CD8-positive, alpha-beta T cell (primary cell): ENCODE measurements at regions of chr1 and their contacts with region 1.

Region 1: DNA sequence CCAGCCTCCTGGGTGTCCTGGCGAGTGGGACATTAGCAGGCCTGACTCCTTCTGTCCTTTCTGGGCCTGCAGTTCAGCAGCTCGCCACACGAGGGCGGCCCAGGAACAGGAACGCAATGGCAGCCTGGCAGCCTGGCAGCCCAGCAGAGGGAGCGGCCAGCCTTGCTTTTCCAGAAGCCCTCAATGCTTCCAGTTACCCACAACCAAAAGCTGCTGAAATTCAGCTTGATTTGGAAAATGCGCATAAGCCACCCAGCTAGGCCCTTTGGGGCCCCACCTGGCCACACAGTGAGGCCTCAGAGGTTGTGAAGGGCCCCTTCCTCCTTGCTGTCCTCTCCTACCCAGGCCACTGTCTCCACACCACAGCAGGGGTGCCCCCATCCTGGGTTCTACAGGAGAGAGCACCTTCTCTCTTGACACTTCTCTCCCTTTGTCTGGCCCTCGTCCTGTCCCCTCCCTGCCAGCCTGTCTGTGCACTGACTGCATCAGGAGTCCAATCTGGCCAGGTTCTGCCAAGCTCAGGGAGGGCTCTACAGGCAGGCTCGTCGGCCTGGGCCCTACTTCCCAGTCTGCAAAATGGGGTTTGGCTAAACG is 103.4 kb upstream of the VAMP3 start:
- DNase-seq: peak; percentile 73 to 91 (median 81)
- ATAC-seq: peak; percentile 83
- H3K4me3 ChIP-seq: no peak overlapping the region
- H3K4me3 Mint-ChIP-seq: no peak overlapping the region
- H3K27ac ChIP-seq: no peak overlapping the region
- H3K27ac Mint-ChIP-seq: no peak overlapping the region
- H3K4me1 ChIP-seq: peaks cover 5% of the 10 kb centered on the region
- H3K4me1 Mint-ChIP-seq: peaks cover 10% of the 10 kb centered on the region
- H3K27me3 ChIP-seq: peaks cover 0 to 3% of the 10 kb centered on the region in 2 experiments
- H3K27me3 Mint-ChIP-seq: peaks cover 2% of the 10 kb centered on the region
- CTCF ChIP-seq: peak; percentile 95

Region 2: GRCh38 chr1:7680207-7680954 is 12.7 kb after region 1 on chr1:
- CTCF ChIA-PET with region 1: interaction called, 65 read pairs
- POLR2A ChIA-PET with region 1: interaction called, 3 read pairs
- intact Hi-C with region 1: no loop called
- DNase-seq: peak in 8 of 9 experiments; percentile 24 to 69 (median 47)
- ATAC-seq: peak; percentile 66
- H3K4me3 ChIP-seq: peak overlapping the region; percentile 45 to 80
- H3K4me3 Mint-ChIP-seq: peak overlapping the region; percentile 77
- H3K27ac ChIP-seq: peak overlapping the region in 1 of 2 experiments; percentile 47
- H3K27ac Mint-ChIP-seq: no peak overlapping the region
- H3K4me1 ChIP-seq: peaks cover 5% of the 10 kb centered on the region
- H3K4me1 Mint-ChIP-seq: no peaks in the 10 kb centered on the region
- H3K27me3 ChIP-seq: no peaks in the 10 kb centered on the region
- H3K27me3 Mint-ChIP-seq: peaks cover under 1% of the 10 kb centered on the region
- CTCF ChIP-seq: no peak

Region 3: GRCh38 chr1:7698641-7699040 is 30.9 kb after region 1 on chr1:
- CTCF ChIA-PET with region 1: interaction called, 22 read pairs
- POLR2A ChIA-PET with region 1: no interaction called
- intact Hi-C with region 1: no loop called
- DNase-seq: no peak
- ATAC-seq: no peak
- H3K4me3 ChIP-seq: no peak overlapping the region
- H3K4me3 Mint-ChIP-seq: no peak overlapping the region
- H3K27ac ChIP-seq: no peak overlapping the region
- H3K27ac Mint-ChIP-seq: no peak overlapping the region
- H3K4me1 ChIP-seq: no peaks in the 10 kb centered on the region
- H3K4me1 Mint-ChIP-seq: peaks cover 11% of the 10 kb centered on the region
- H3K27me3 ChIP-seq: peaks cover 0 to 3% of the 10 kb centered on the region in 2 experiments
- H3K27me3 Mint-ChIP-seq: peaks cover 18% of the 10 kb centered on the region
- CTCF ChIP-seq: no peak

Region 4: DNA sequence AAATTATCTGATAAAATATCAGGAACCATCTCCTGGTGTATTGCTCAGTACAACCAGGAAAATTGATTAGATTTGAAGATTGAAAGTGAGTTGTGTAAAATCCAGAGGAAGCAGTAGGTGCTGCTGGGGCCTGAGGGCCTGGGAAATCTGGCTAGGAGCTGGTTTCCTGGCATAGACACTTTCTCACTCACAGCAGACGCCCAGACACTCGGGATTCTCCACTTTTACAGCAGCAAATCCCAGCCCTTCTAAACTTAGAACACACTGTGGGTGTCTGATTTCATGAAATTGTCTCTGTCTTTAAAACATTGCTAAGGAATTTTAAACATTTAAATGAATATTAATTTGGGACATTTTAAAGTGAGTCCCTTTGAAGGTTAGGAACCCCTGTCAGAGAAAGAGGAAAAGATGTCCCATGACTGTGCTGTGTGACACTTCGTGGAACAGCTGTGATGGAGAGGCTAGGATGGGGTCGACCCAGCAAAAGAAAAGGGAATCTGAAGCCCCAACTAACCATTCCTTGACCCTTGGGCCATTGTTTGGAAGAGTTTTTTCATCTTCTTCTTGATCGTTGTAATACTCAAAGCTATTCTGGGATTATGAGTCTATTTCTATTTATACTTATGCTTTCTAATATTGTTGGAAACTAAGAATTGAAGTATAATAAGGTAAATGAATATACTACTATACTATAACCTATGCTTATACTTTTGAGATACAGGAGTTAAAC is 54.4 kb after region 1 on chr1:
- CTCF ChIA-PET with region 1: interaction called, 10 read pairs
- POLR2A ChIA-PET with region 1: no interaction called
- intact Hi-C with region 1: no loop called
- DNase-seq: no peak
- ATAC-seq: no peak
- H3K4me3 ChIP-seq: no peak overlapping the region
- H3K4me3 Mint-ChIP-seq: no peak overlapping the region
- H3K27ac ChIP-seq: no peak overlapping the region
- H3K27ac Mint-ChIP-seq: no peak overlapping the region
- H3K4me1 ChIP-seq: no peaks in the 10 kb centered on the region
- H3K4me1 Mint-ChIP-seq: peaks cover 5% of the 10 kb centered on the region
- H3K27me3 ChIP-seq: no peaks in the 10 kb centered on the region
- H3K27me3 Mint-ChIP-seq: peaks cover 21% of the 10 kb centered on the region
- CTCF ChIP-seq: no peak

Region 5: DNA sequence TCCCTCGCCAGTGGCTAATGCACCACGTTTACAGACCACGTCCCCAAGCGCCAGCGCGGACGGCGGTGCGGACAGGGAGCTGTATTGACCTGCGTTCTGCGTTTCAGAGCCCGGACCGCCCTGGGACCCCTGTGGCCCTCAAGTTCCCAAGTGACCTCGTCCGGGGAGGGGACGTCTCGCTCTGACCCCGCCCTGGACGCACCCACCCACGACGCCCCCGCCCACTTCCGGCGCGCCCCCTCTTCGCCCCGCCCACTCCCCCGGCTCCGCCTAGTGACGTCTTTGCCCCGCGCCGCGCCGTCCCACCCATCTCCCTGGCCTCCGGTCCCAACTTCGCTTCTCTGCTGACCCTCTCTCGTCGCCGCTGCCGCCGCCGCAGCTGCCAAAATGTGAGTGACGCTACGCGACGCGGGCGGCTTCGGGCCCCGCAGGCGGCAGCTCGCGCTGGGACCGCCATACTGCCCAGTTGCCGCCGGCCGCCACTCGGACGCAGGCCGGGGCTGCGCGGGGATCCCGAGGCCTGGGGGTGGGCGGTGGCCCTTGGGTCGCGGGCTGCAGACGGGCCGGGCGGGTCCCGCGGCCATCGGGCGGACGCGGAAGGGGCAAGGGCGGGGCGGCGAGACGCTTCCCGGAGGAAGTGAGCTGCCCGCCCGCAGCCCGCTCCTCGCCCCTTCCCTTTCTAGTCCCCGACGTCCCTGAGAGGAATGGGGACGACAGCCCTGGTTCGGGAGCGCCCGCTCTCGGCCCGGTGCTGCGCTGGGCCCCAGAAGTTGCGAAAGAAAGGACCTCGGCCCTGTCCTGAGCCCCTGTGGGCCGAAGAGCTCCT is 103.5 kb after region 1 on chr1 and contains the start of gene VAMP3:
- CTCF ChIA-PET with region 1: interaction called, 16 read pairs
- POLR2A ChIA-PET with region 1: no interaction called
- intact Hi-C with region 1: no loop called
- DNase-seq: peak; percentile 71 to 92 (median 87)
- ATAC-seq: peak; percentile 96
- H3K4me3 ChIP-seq: peak within 1 kb of the TSS; percentile 68 to 80
- H3K4me3 Mint-ChIP-seq: peak within 1 kb of the TSS; percentile 88
- H3K27ac ChIP-seq: peak within 1 kb of the TSS; percentile 60 to 74
- H3K27ac Mint-ChIP-seq: peak within 1 kb of the TSS; percentile 91
- H3K4me1 ChIP-seq: peaks cover 9% of the 10 kb centered on the region
- H3K4me1 Mint-ChIP-seq: peaks cover 42% of the 10 kb centered on the region
- H3K27me3 ChIP-seq: no peaks in the 10 kb centered on the region
- H3K27me3 Mint-ChIP-seq: peaks cover 4% of the 10 kb centered on the region
- CTCF ChIP-seq: no peak
- total RNA-seq, gene VAMP3: 76.2 to 88.1 TPM

Region 6: GRCh38 chr1:7961216-7962015 is 293.7 kb after region 1 on chr1 and contains the start of gene PARK7:
- CTCF ChIA-PET with region 1: no interaction called
- POLR2A ChIA-PET with region 1: no interaction called
- intact Hi-C with region 1: loop called in 1 of 2 experiments (anchors 5 kb)
- DNase-seq: peak; percentile 99 to 100 (median 100)
- ATAC-seq: peak; percentile 95
- H3K4me3 ChIP-seq: peak within 1 kb of the TSS; percentile 60 to 87
- H3K4me3 Mint-ChIP-seq: peak within 1 kb of the TSS; percentile 99
- H3K27ac ChIP-seq: peak within 1 kb of the TSS; percentile 76 to 92
- H3K27ac Mint-ChIP-seq: peak within 1 kb of the TSS; percentile 100
- H3K4me1 ChIP-seq: peaks cover 51% of the 10 kb centered on the region
- H3K4me1 Mint-ChIP-seq: peaks cover 62% of the 10 kb centered on the region
- H3K27me3 ChIP-seq: no peaks in the 10 kb centered on the region
- H3K27me3 Mint-ChIP-seq: no peaks in the 10 kb centered on the region
- CTCF ChIP-seq: peak; percentile 49
- total RNA-seq, gene PARK7: 67.9 to 70.0 TPM